IMR-90 (cell line): ENCODE measurements at regions of chr3 and their contacts with region 1.

Region 1: DNA sequence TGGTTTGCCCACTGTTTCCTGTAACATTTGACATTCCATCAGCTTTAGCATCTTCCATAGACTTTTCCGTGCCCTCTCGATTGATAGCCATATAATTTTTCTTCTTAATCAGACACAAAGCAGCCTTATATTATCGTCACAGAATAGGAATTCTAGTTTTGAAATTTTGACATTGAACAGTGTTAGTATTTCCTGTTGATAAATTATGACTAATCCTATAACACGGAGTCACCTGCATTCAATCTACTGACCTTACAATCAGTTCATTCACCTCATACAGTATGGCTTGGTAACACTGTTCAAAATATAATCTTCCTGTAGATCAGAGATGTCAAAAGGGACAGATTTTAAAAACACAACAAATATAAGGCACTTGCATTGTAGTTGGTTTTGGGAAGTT is 423.7 kb downstream of the C3orf38 start:
- DNase-seq: no peak
- ATAC-seq: no peak
- H3K4me3 ChIP-seq: no peak overlapping the region
- H3K27ac ChIP-seq: no peak overlapping the region
- H3K4me1 ChIP-seq: no peaks in the 10 kb centered on the region
- H3K27me3 ChIP-seq: no peaks in the 10 kb centered on the region
- CTCF ChIP-seq: no peak
- POLR2A ChIP-seq: no peak
- RAD21 ChIP-seq: no peak

Region 2: GRCh38 chr3:88452228-88452627 is 121.2 kb before region 1 on chr3:
- CTCF ChIA-PET with region 1: no interaction called
- POLR2A ChIA-PET with region 1: no interaction called
- dilution Hi-C with region 1: no loop called
- in situ Hi-C with region 1: no loop called
- intact Hi-C with region 1: loop called (anchors 10 kb)
- DNase-seq: no peak
- ATAC-seq: no peak
- H3K4me3 ChIP-seq: no peak overlapping the region
- H3K27ac ChIP-seq: no peak overlapping the region
- H3K4me1 ChIP-seq: no peaks in the 10 kb centered on the region
- H3K27me3 ChIP-seq: no peaks in the 10 kb centered on the region
- CTCF ChIP-seq: no peak
- POLR2A ChIP-seq: no peak
- RAD21 ChIP-seq: no peak

Region 3: DNA sequence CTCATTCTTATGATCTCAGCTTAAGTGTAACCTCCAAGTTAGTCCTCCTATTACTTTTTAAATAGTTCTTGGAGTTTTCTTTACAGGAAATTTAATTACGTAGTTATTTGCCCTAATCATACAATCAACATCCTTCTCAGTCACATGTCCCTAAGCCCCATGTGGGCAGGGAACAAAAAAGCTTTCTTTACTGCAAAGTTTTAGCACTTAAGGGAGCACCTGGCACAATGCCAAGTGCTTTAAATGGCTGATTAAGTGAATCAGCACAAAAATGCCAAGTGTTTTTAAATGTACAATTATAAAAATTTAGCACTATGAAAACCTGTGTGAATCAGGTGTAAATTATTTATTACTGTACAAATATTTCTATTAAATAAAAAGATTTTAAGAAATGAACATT is 21.6 kb after region 1 on chr3:
- CTCF ChIA-PET with region 1: no interaction called
- POLR2A ChIA-PET with region 1: no interaction called
- dilution Hi-C with region 1: no loop called
- in situ Hi-C with region 1: no loop called
- intact Hi-C with region 1: no loop called
- DNase-seq: no peak
- ATAC-seq: no peak
- H3K4me3 ChIP-seq: no peak overlapping the region
- H3K27ac ChIP-seq: no peak overlapping the region
- H3K4me1 ChIP-seq: no peaks in the 10 kb centered on the region
- H3K27me3 ChIP-seq: no peaks in the 10 kb centered on the region
- CTCF ChIP-seq: no peak
- POLR2A ChIP-seq: no peak
- RAD21 ChIP-seq: no peak